MCF 10A (cell line): ENCODE measurements at regions of chr14 and their contacts with region 1.

Region 1: GRCh38 chr14:91510174-91511042 is at the start of gene PPP4R3A:
- DNase-seq: peak; percentile 96
- H3K4me3 Mint-ChIP-seq: peak within 1 kb of the TSS; percentile 85
- H3K27ac Mint-ChIP-seq: peak within 1 kb of the TSS; percentile 99
- H3K4me1 Mint-ChIP-seq: no peaks in the 10 kb centered on the region
- H3K27me3 Mint-ChIP-seq: no peaks in the 10 kb centered on the region
- CTCF ChIP-seq: no peak
- total RNA-seq, gene PPP4R3A: 81.3 and 104 TPM in 2 replicates

Region 2: GRCh38 chr14:91009501-91010152 is 500.8 kb before region 1 on chr14:
- CTCF ChIA-PET with region 1: no interaction called
- POLR2A ChIA-PET with region 1: no interaction called
- intact Hi-C with region 1: no loop called
- DNase-seq: no peak
- H3K4me3 Mint-ChIP-seq: no peak overlapping the region
- H3K27ac Mint-ChIP-seq: no peak overlapping the region
- H3K4me1 Mint-ChIP-seq: peaks cover 7% of the 10 kb centered on the region
- H3K27me3 Mint-ChIP-seq: no peaks in the 10 kb centered on the region
- CTCF ChIP-seq: no peak

Region 3: GRCh38 chr14:91439345-91439744 is 71.1 kb before region 1 on chr14:
- CTCF ChIA-PET with region 1: no interaction called
- POLR2A ChIA-PET with region 1: no interaction called
- intact Hi-C with region 1: no loop called
- DNase-seq: no peak
- H3K4me3 Mint-ChIP-seq: no peak overlapping the region
- H3K27ac Mint-ChIP-seq: no peak overlapping the region
- H3K4me1 Mint-ChIP-seq: no peaks in the 10 kb centered on the region
- H3K27me3 Mint-ChIP-seq: peaks cover 23% of the 10 kb centered on the region
- CTCF ChIP-seq: no peak

Region 4: GRCh38 chr14:91496790-91497189 is 13.6 kb before region 1 on chr14:
- CTCF ChIA-PET with region 1: no interaction called
- POLR2A ChIA-PET with region 1: interaction called, 40 read pairs
- intact Hi-C with region 1: no loop called
- DNase-seq: no peak
- H3K4me3 Mint-ChIP-seq: no peak overlapping the region
- H3K27ac Mint-ChIP-seq: peak overlapping the region; percentile 28
- H3K4me1 Mint-ChIP-seq: peaks cover 34% of the 10 kb centered on the region
- H3K27me3 Mint-ChIP-seq: no peaks in the 10 kb centered on the region
- CTCF ChIP-seq: no peak